ENCODE measurements at regions of chr2 and their contacts with region 1.

Region 1: GRCh38 chr2:98835831-98836385 is 100.1 kb downstream of the CRACDL start:
- DNase-seq: no peak
- H3K4me3 ChIP-seq: no peak overlapping the region
- H3K27ac ChIP-seq: no peak overlapping the region
- H3K4me1 ChIP-seq: no peaks in the 10 kb centered on the region
- H3K27me3 ChIP-seq: no peaks in the 10 kb centered on the region
- CTCF ChIP-seq: no peak
- POLR2A ChIP-seq: no peak

Region 2: GRCh38 chr2:97718051-97718882 is 1117.6 kb before region 1 on chr2:
- intact Hi-C with region 1: no loop called
- DNase-seq: no peak
- H3K4me3 ChIP-seq: no peak overlapping the region
- H3K27ac ChIP-seq: no peak overlapping the region
- H3K4me1 ChIP-seq: no peaks in the 10 kb centered on the region
- H3K27me3 ChIP-seq: no peaks in the 10 kb centered on the region
- CTCF ChIP-seq: no peak
- POLR2A ChIP-seq: no peak

Region 3: DNA sequence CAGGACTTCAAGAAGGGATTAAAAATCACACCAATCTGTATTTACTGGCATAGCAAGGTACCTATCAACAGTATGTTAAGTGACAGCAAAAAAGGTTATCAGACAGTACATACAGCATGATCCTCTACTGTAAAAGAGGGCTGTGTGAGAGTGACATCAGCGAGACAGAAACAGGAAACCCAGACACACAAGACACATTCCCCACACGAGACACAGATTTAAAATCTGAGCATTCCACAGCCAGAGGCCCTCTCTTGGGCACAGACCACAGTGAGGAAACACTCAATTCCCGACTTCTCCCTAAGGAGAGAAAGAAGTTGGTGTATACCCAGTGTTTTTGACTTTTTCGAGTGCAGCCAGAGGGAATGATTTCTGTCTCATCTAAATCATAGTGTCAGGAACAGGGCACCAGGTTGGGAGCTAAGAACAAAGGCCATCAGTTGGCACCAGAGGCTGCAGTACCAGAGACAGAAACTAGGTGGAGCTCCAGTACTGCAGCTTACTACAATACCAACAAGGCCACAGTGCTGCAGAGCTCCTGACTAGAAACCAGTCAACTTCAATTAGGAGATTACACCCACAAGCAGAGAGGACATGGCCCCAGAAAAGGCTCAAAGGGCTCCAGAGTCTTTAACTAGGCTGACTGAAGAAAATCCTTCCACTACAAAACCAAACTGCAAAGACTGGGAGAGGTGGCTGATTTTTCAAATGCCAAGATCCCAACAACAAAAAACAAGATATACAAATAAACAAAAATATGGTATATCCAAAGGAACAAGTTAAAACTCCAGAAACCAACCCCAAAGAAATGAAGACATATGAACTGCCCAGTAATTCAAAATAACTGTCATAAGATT is 186.5 kb before region 1 on chr2:
- intact Hi-C with region 1: loop called (anchors 10 kb)
- DNase-seq: peak; percentile 72 to 82
- H3K4me3 ChIP-seq: no peak overlapping the region
- H3K27ac ChIP-seq: no peak overlapping the region
- H3K4me1 ChIP-seq: no peaks in the 10 kb centered on the region
- H3K27me3 ChIP-seq: no peaks in the 10 kb centered on the region
- CTCF ChIP-seq: peak; percentile 81 to 96 (median 94)
- POLR2A ChIP-seq: no peak

Region 4: DNA sequence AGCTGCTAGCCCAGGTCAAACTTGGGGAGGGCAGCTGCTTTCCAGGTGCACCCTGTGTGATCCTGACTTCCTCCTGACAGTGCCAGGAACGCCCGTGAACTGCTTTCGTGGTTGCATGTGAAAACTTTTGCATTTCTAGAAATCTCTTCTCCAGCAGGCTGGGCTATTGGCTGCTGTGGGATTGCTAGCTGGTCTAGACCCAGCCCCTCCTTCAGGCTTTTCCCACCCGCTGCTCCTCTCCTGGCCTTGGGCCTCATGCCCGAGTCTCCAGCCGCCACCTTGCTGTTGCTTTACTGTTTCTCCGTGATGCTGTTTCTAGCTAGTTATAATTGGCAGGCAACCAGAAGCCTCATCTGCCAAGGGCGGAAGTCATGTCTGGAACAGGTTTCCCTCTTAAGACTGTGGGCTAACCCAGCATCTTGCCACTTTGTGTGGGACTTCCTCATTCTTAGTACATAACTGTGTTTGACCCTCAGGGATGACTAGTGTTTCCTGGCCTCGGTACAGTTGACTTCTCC is 77.9 kb before region 1 on chr2:
- intact Hi-C with region 1: no loop called
- DNase-seq: peak; percentile 73 to 92
- H3K4me3 ChIP-seq: peak overlapping the region in 2 of 3 donors; percentile 34 to 36
- H3K27ac ChIP-seq: peak overlapping the region; percentile 48 to 66
- H3K4me1 ChIP-seq: peaks cover 0 to 3% of the 10 kb centered on the region in 2 donors
- H3K27me3 ChIP-seq: no peaks in the 10 kb centered on the region
- CTCF ChIP-seq: no peak
- POLR2A ChIP-seq: no peak

Region 5: GRCh38 chr2:100230754-100231153 is 1394.8 kb after region 1 on chr2:
- intact Hi-C with region 1: loop called (anchors 5 kb)
- DNase-seq: no peak
- H3K4me3 ChIP-seq: no peak overlapping the region
- H3K27ac ChIP-seq: no peak overlapping the region
- H3K4me1 ChIP-seq: no peaks in the 10 kb centered on the region
- H3K27me3 ChIP-seq: no peaks in the 10 kb centered on the region
- CTCF ChIP-seq: no peak
- POLR2A ChIP-seq: no peak